ENCODE measurements at regions of chr2 and their contacts with region 1.

Region 1: GRCh38 chr2:70871398-70872211 is 36.0 kb upstream of the CD207 start:
- DNase-seq: peak; percentile 83 to 93 (median 88)
- H3K4me3 ChIP-seq: peak overlapping the region in 1 of 3 donors; percentile 18
- H3K27ac ChIP-seq: no peak overlapping the region
- H3K4me1 ChIP-seq: peaks cover 0 to 5% (median 5%) of the 10 kb centered on the region in 3 donors
- H3K27me3 ChIP-seq: peaks cover 10% of the 10 kb centered on the region
- CTCF ChIP-seq: peak; percentile 97

Region 2: GRCh38 chr2:70480468-70480867 is 391.1 kb before region 1 on chr2:
- intact Hi-C with region 1: no loop called
- DNase-seq: no peak
- H3K4me3 ChIP-seq: no peak overlapping the region
- H3K27ac ChIP-seq: no peak overlapping the region
- H3K4me1 ChIP-seq: peaks cover 0 to 4% (median 0%) of the 10 kb centered on the region in 3 donors
- H3K27me3 ChIP-seq: no peaks in the 10 kb centered on the region
- CTCF ChIP-seq: no peak

Region 3: GRCh38 chr2:70789304-70790135 is 82.1 kb before region 1 on chr2:
- intact Hi-C with region 1: no loop called
- DNase-seq: peak; percentile 68 to 89 (median 82)
- H3K4me3 ChIP-seq: peak overlapping the region in 2 of 3 donors; percentile 16 to 38
- H3K27ac ChIP-seq: no peak overlapping the region
- H3K4me1 ChIP-seq: peaks cover 0 to 6% (median 0%) of the 10 kb centered on the region in 3 donors
- H3K27me3 ChIP-seq: peaks cover 14% of the 10 kb centered on the region
- CTCF ChIP-seq: peak; percentile 50

Region 4: DNA sequence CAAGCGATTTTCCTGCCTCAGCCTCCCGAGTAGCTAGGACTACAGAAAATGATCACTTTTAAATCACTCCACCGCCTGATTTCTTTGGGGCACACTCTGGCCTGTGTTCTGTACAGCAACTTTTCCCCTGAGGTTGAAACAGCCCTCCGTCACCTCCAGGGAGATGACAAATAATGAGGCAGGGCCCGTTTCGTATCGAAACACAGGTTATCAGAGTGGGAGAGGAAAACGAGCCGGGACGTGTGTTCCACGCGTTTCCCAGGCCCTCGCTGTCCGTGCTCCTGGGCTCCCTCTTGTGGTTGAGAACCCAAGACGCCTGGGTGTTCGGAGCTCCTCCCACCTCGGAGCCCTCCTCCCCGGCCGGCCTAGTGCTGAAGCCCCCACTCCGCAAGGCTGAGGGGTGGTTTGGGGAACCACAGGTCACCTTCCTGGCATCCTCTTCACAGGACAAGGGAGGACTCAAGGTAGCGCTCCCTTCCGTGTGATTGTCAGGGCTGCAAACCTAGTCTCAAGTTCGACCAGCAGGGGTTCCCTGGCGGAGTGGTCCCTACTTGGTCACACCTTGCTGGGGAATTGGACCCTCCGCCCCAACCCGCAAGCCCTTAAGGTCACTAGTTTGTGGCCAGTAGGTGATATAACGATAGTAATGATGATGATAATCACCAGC is 76.9 kb after region 1 on chr2:
- intact Hi-C with region 1: loop called (anchors 5 kb)
- DNase-seq: peak; percentile 78 to 90 (median 86)
- H3K4me3 ChIP-seq: peak overlapping the region in 2 of 3 donors; percentile 49 to 55
- H3K27ac ChIP-seq: no peak overlapping the region
- H3K4me1 ChIP-seq: peaks cover 0 to 9% (median 0%) of the 10 kb centered on the region in 3 donors
- H3K27me3 ChIP-seq: peaks cover 27% of the 10 kb centered on the region
- CTCF ChIP-seq: peak; percentile 49

Region 5: GRCh38 chr2:71130113-71130904 is 258.7 kb after region 1 on chr2 and contains the starts of genes MCEE and MPHOSPH10:
- intact Hi-C with region 1: no loop called
- DNase-seq: peak; percentile 91 to 96 (median 96)
- H3K4me3 ChIP-seq: peak within 1 kb of the TSS; percentile 90 to 98 (median 96)
- H3K27ac ChIP-seq: peak within 1 kb of the TSS; percentile 93 to 98
- H3K4me1 ChIP-seq: peaks cover 0 to 15% (median 11%) of the 10 kb centered on the region in 3 donors
- H3K27me3 ChIP-seq: no peaks in the 10 kb centered on the region
- CTCF ChIP-seq: no peak
- total RNA-seq, gene MCEE: 20.3 TPM
- total RNA-seq, gene MPHOSPH10: 32.3 TPM